Breast epithelium (tissue), 4 donors: ENCODE measurements at regions of chr15 and their contacts with region 1.

Region 1: DNA sequence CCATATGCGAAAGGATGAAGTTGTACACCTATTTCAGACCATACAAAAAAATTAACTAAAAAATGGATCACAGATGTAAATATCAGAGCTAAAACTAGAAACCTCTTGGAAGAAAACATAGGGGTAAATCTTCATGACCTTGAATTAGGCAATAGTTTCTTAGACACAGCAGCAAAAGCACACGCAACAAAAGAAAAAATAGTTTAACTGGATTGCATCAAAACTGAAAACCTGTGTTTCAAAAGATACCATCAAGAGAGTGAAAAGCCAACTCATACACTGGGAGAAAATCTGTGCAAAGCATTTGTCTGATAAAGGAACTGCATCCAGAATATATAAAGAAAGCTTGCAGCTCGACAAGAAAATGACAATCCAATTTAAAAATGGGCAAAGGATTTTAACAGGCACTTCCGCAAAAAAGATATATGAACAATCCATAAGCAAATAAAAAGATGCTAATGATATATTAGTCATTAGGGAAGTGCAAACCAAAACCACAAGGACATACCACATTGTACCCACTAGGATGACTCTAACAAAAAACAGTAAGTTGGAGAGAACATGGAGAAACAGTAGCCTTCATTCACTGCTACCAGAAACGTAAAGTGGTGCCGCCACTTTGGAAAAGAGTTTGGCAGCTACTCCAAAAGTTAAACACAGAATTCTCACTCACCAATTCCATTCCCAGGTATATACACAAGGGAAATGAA is 263.1 kb downstream of the ADAMTS17 start:
- DNase-seq: no peak
- H3K4me3 ChIP-seq: no peak overlapping the region
- H3K27ac ChIP-seq: no peak overlapping the region
- H3K4me1 ChIP-seq: no peaks in the 10 kb centered on the region
- H3K27me3 ChIP-seq: no peaks in the 10 kb centered on the region
- CTCF ChIP-seq: no peak
- POLR2A ChIP-seq: no peak

Region 2: DNA sequence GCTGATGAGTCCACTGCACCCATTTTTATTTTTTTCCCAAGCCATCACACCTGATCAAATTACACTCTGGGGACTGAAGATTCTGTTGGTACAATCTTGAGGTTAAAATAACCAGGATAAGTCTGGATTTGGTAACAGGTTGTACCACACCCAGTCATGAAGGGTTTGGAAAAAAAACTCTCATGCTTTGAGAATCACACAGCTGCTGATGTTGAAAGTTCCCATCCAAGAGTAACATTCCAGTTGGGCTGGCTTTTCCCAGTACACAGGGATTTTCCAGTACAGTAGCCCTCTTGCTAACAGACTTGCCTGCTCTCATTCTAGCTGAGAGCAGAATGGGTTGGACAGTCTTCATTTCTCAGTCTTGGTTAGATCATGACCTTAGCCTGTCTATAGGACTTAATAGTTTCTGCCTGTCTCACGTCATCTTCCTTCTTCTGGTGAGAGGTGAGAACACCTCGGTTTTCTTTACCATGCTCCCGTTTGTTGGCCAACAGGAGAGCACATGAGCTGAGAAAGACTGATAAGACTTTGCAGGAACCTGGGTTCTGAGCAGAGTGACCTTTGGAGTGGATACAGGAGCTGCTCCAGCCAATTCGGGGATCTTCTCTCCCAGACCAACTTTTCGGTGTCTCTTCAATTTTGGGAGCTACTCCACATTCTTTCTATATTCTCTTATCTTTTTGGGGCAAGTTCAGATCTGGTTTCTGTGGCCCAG is 45.4 kb before region 1 on chr15:
- intact Hi-C with region 1: no loop called
- DNase-seq: no peak
- H3K4me3 ChIP-seq: no peak overlapping the region
- H3K27ac ChIP-seq: no peak overlapping the region
- H3K4me1 ChIP-seq: no peaks in the 10 kb centered on the region
- H3K27me3 ChIP-seq: no peaks in the 10 kb centered on the region
- CTCF ChIP-seq: no peak
- POLR2A ChIP-seq: no peak

Region 3: DNA sequence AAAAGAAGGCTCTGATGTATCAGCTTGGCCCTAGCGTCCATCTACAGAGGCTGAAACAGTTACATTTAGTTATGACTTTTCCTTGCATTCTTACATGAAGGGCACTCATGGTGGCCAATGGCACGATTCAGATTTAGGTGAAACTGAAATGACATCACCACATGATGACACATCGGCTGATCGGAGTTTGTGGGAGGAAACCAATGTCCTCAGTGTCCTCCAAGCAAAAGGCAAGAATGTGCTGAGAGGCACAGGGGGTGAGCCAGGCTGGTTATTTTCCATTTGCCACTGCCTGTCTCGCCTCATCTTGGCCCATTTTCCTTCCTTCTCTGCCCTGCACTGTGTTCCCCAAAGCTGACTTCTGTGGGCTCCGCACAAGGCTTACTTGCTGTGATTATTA is 1611.2 kb after region 1 on chr15:
- intact Hi-C with region 1: loop called (anchors 10 kb)
- DNase-seq: no peak
- H3K4me3 ChIP-seq: no peak overlapping the region
- H3K27ac ChIP-seq: no peak overlapping the region
- H3K4me1 ChIP-seq: no peaks in the 10 kb centered on the region
- H3K27me3 ChIP-seq: no peaks in the 10 kb centered on the region
- CTCF ChIP-seq: no peak
- POLR2A ChIP-seq: no peak